KBM-7 (cell line): ENCODE measurements at regions of chr9 and their contacts with region 1.

Region 1: DNA sequence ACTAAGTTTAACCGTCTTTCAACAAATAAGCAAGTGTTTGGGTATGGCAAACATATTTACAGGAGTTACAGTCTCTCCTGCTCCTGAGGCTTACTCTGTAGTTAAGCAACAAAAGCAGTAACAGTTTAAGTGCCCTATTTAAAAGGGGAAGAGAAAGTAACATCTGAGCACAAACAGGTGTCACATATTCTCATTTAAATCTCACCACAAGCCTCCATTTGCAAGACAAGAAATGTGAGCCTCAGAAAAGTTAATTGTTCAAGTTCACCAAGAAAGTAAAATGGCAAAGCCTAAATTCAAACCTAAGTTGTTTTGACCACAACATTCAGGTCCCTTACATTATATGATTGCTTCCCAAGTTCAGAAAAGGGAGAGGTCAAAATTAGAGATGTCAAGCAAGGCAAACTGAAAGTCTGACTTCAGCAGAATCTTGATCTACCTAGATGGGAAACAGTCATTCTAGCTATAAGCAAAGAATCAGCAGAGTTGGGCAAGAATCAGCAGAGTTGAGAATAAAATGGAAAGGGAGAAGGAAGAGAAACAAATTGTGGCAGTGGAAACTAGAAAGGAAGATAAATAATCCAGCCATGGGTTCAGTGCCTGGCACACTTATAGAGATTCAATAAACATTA is 93.4 kb downstream of the STRBP start:
- DNase-seq: peak; percentile 16

Region 2: GRCh38 chr9:123049589-123050222 is 125.3 kb before region 1 on chr9:
- in situ Hi-C with region 1: loop called (anchors 25 kb)
- DNase-seq: no peak

Region 3: GRCh38 chr9:124450241-124450924 is 1275.4 kb after region 1 on chr9 and contains the start of gene ADGRD2:
- in situ Hi-C with region 1: no loop called
- DNase-seq: no peak